ENCODE measurements at regions of chr2 and their contacts with region 1.

Region 1: DNA sequence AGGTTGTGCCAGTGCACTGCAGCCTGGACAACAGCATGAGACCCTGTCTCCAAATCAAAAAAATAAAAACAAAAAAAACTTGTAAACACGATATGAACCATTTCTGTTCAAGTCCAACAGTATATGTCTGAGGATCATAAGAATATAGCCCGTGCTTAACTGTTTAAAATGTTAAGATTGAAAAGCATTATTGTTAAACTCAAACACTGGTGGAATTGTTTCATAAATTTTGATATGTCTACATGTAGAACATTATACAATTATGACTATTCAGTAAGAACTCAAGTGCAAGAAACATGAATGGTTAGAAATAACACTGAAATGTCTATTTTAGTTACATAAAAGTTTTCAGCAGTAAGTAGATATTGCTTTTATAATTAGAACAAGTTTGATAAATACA is 29.7 kb downstream of the PPIG start:
- DNase-seq: no peak
- ATAC-seq: no peak
- H3K4me3 ChIP-seq: no peak overlapping the region
- H3K4me3 Mint-ChIP-seq: no peak overlapping the region
- H3K27ac ChIP-seq: no peak overlapping the region
- H3K27ac Mint-ChIP-seq: no peak overlapping the region
- H3K4me1 ChIP-seq: no peaks in the 10 kb centered on the region
- H3K4me1 Mint-ChIP-seq: peaks cover 14 to 26% (median 23%) of the 10 kb centered on the region in 3 donors
- H3K27me3 ChIP-seq: no peaks in the 10 kb centered on the region
- H3K27me3 Mint-ChIP-seq: no peaks in the 10 kb centered on the region

Region 2: DNA sequence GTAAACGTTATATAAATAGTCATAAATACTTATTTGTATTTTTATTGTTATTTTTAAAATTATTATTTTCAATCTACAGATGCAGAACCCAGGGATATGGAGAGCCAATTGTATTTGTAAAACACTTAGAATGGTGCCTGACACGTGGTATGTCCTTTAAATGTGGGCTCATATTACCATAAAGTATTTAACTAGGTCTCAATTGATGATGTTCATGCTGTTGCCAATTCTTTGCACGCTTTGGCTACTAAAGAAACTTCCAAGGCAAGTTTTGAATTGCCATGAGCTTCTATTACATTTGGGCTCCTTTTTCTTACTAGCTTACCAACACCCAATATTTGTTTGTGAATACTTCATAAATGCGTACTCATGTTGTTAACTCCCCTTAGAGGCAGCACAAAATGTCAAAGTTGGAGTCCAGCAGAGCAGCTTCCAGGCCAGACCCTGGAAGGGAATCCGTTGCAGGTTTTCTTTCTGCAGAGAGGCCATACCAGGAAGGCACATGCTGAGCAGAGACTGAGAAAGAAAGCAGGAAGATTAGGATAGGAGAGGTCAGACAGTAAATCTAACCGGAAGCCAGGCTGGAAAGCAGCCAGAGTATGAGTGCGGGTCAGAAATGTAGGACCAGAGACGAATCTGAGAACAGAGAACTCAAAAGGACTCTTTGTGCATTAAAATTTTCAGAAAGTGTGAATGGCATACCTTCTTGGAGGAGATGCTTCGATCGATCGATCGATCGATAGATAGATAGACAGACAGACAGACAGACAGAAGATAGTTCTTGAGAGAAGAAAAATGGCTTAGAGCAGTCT is 815.6 kb before region 1 on chr2:
- CTCF ChIA-PET with region 1: no interaction called
- POLR2A ChIA-PET with region 1: no interaction called
- DNase-seq: no peak
- ATAC-seq: no peak
- H3K4me3 ChIP-seq: no peak overlapping the region
- H3K4me3 Mint-ChIP-seq: no peak overlapping the region
- H3K27ac ChIP-seq: no peak overlapping the region
- H3K27ac Mint-ChIP-seq: peak overlapping the region in 1 of 2 donors; percentile 33
- H3K4me1 ChIP-seq: peaks cover 0 to 2% of the 10 kb centered on the region in 2 experiments
- H3K4me1 Mint-ChIP-seq: peaks cover 0 to 6% (median 5%) of the 10 kb centered on the region in 3 donors
- H3K27me3 ChIP-seq: no peaks in the 10 kb centered on the region
- H3K27me3 Mint-ChIP-seq: peaks cover 0 to 4% of the 10 kb centered on the region in 2 donors

Region 3: DNA sequence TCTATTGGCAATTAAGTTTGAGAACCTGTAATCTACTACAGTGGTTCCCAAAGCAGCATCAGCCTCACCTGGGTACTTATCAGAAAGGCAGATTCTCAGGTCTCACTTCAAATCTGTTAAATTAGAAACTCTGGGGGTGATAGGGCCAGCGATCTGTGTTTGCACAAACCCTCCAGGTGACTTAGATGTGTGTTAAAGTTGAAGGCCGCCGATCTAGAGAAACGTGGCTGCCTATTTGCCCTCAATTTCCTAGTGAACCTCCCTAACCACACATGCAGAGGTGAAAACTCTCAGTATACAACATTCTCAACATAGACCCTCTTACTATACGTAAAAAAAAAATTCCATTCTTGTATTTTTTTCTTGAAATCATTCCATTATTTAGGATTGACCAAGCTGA is 90.2 kb before region 1 on chr2:
- CTCF ChIA-PET with region 1: no interaction called
- POLR2A ChIA-PET with region 1: interaction called in 1 of 2 experiments, 12 read pairs
- DNase-seq: no peak
- ATAC-seq: no peak
- H3K4me3 ChIP-seq: no peak overlapping the region
- H3K4me3 Mint-ChIP-seq: no peak overlapping the region
- H3K27ac ChIP-seq: no peak overlapping the region
- H3K27ac Mint-ChIP-seq: no peak overlapping the region
- H3K4me1 ChIP-seq: no peaks in the 10 kb centered on the region
- H3K4me1 Mint-ChIP-seq: no peaks in the 10 kb centered on the region
- H3K27me3 ChIP-seq: no peaks in the 10 kb centered on the region
- H3K27me3 Mint-ChIP-seq: no peaks in the 10 kb centered on the region

Measured in T-cell (primary cell).